ENCODE measurements at regions of chr17 and their contacts with region 1.

Region 1: GRCh38 chr17:28252436-28252835 is 66.6 kb upstream of the TMEM97 start:
- DNase-seq: no peak
- H3K4me3 ChIP-seq: no peak overlapping the region
- H3K27ac ChIP-seq: no peak overlapping the region
- H3K27me3 ChIP-seq: peaks cover 25% of the 10 kb centered on the region
- CTCF ChIP-seq: no peak

Region 2: DNA sequence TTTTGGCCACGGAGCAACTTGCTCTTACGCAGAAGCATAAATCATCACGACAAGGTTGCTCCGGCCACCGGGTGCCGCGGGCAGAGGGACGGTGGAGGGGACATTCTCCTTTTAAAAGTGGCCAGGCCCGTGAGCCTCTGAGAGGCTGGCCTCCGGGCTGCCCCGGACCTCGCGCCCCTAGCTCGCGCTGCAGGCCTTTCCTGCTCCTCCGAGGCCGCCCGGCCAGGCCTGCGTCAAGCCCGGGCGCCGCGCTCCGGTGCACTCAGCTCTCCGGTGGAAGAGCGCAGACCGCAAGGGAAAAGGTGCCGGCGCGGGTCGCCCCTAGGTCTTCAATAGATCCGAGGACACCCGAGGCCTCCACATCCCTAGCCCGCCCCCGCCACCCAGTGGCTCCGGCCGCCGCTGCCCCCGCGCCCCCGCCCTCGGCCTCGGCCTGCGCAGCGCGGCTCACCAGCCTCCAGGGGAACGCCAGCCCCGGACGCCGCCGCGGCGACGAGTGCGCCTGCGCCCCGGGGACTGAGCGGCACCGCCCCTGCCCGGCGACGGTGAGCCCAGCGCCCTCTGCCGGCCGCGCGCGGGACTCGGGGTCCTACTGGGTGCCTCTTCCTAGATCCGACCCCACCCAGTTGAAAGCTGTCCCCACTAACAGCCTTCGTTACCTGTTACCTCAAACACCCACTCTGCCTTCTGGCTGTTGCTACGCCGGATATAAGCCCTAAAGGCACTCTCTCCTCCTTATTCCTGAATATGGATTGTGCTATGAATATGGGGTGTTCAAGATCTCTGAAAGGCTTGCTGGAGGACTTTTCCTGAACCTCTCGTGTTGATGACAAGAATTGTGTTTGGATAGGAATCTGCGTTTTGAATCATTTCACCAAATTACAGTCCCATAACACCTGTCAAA is 359.3 kb before region 1 on chr17 and contains the start of gene LYRM9:
- CTCF ChIA-PET with region 1: interaction called, 11 read pairs
- POLR2A ChIA-PET with region 1: no interaction called
- DNase-seq: peak; percentile 37
- H3K4me3 ChIP-seq: peak within 1 kb of the TSS; percentile 65
- H3K27ac ChIP-seq: peak within 1 kb of the TSS; percentile 21
- H3K27me3 ChIP-seq: peaks cover 4% of the 10 kb centered on the region
- CTCF ChIP-seq: peak; percentile 78
- polyA plus RNA-seq, gene LYRM9: 4.9 and 6.1 TPM in 2 replicates

Region 3: GRCh38 chr17:28230011-28230410 is 22.4 kb before region 1 on chr17:
- CTCF ChIA-PET with region 1: interaction called, 42 read pairs
- POLR2A ChIA-PET with region 1: no interaction called
- DNase-seq: no peak
- H3K4me3 ChIP-seq: no peak overlapping the region
- H3K27ac ChIP-seq: no peak overlapping the region
- H3K27me3 ChIP-seq: peaks cover 40% of the 10 kb centered on the region
- CTCF ChIP-seq: no peak

Region 4: GRCh38 chr17:28951991-28952975 is 699.8 kb after region 1 on chr17:
- CTCF ChIA-PET with region 1: no interaction called
- POLR2A ChIA-PET with region 1: no interaction called
- DNase-seq: peak; percentile 99
- H3K4me3 ChIP-seq: peak overlapping the region; percentile 77
- H3K27ac ChIP-seq: peak overlapping the region; percentile 98
- H3K27me3 ChIP-seq: no peaks in the 10 kb centered on the region
- CTCF ChIP-seq: no peak

Measured in AG04450 (cell line).